K562 (cell line): ENCODE measurements at regions of chr10 and their contacts with region 1.

Region 1: DNA sequence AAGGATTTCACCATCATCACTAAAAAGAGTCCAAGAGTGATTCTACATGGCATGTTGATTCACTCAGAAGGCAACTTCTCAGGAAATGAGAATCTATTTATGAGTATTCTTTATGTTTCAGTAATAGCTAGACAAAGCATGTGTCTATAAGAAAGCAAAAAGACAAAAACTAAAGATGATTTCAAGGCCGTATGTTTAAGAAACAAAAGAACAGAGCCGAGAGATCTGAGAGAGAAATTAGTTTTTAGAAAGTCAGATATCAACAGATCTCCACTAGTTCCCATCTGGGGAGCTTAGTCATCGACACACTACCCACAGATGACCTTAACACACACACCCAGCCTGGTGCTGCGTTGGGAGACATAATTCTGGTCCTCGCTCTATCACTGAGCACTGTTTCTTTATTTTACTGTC is 21.0 kb downstream of the PIP4K2A start:
- DNase-seq: peak; percentile 36 to 82 (median 56)
- ATAC-seq: peak; percentile 86
- H3K4me3 ChIP-seq: no peak overlapping the region
- H3K27ac ChIP-seq: peak overlapping the region; percentile 27; the same call in 1 of the 3 replicates
- H3K4me1 ChIP-seq: peaks cover 5 to 49% of the 10 kb centered on the region in 2 experiments
- H3K27me3 ChIP-seq: no peaks in the 10 kb centered on the region
- CTCF ChIP-seq: no peak
- EP300 ChIP-seq: peak; percentile 52; the same call in 1 of the 2 replicates
- POLR2A ChIP-seq: no peak
- RAD21 ChIP-seq: no peak; a peak in 1 of 4 replicates

Region 2: GRCh38 chr10:22704471-22704911 is 11.1 kb after region 1 on chr10:
- CTCF ChIA-PET with region 1: no interaction called
- POLR2A ChIA-PET with region 1: interaction called, 18 read pairs
- in situ Hi-C with region 1: no loop called
- intact Hi-C with region 1: no loop called
- DNase-seq: no peak
- ATAC-seq: 0 out of 3 replicates have a peak, but pooled peaks have one; percentile 9
- H3K4me3 ChIP-seq: no peak overlapping the region
- H3K27ac ChIP-seq: peak overlapping the region; percentile 41; the same call in 2 of the 3 replicates
- H3K4me1 ChIP-seq: peaks cover 19 to 61% of the 10 kb centered on the region in 2 experiments
- H3K27me3 ChIP-seq: no peaks in the 10 kb centered on the region
- CTCF ChIP-seq: no peak
- EP300 ChIP-seq: no peak
- POLR2A ChIP-seq: no peak
- RAD21 ChIP-seq: no peak